ENCODE measurements at regions of chr9 and their contacts with region 1.

Region 1: DNA sequence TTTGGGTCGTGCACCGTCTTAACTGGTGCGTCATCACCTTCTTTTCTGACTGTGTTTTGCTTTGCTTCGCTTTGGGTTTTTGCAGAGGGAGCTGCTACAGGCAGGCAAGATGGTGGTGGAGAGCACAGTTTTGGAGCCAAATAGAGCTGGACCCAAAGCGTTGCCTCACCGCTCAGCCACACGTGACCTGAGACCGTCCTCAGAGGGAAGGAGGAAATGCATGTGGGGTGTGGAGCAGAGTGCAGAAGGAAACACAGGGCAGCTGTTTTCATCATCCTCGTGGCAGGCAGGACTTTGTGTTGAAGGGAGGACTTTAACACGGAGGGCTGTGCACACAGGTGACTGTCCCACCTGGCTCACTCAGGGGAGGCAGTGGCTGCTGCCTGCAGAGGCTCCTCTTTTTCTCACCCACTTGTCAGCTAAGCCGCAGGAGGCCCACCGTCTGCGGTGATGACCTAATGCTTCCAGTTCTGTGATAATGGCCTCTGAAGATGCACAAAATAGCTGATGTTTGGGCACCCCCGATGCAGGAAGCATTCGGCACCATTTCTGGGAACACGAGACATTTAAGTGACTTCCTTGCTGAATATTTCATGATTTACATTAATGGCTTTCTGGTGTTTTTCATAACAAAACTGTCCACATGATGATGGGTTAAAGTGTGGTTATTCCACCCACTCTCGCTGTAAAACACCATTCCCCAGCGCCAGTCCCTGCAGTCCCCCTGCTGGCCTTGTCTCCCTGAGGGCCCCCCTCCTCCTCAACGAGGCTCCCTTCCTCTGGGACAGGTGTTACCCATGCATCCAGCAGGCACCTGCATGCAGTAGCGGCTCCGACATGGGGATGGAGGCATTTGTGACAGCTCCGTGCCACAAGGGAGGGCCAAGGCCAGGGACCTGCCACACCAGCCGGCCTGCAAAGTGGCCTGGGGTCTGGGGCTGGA is 12.4 kb upstream of the UBAC1 start:
- DNase-seq: peak in 1 of 3 donors; percentile 51
- H3K4me3 ChIP-seq: no peak overlapping the region
- H3K27ac ChIP-seq: no peak overlapping the region
- H3K4me1 ChIP-seq: peaks cover 13 to 67% (median 47%) of the 10 kb centered on the region in 4 experiments
- H3K27me3 ChIP-seq: no peaks in the 10 kb centered on the region

Region 2: DNA sequence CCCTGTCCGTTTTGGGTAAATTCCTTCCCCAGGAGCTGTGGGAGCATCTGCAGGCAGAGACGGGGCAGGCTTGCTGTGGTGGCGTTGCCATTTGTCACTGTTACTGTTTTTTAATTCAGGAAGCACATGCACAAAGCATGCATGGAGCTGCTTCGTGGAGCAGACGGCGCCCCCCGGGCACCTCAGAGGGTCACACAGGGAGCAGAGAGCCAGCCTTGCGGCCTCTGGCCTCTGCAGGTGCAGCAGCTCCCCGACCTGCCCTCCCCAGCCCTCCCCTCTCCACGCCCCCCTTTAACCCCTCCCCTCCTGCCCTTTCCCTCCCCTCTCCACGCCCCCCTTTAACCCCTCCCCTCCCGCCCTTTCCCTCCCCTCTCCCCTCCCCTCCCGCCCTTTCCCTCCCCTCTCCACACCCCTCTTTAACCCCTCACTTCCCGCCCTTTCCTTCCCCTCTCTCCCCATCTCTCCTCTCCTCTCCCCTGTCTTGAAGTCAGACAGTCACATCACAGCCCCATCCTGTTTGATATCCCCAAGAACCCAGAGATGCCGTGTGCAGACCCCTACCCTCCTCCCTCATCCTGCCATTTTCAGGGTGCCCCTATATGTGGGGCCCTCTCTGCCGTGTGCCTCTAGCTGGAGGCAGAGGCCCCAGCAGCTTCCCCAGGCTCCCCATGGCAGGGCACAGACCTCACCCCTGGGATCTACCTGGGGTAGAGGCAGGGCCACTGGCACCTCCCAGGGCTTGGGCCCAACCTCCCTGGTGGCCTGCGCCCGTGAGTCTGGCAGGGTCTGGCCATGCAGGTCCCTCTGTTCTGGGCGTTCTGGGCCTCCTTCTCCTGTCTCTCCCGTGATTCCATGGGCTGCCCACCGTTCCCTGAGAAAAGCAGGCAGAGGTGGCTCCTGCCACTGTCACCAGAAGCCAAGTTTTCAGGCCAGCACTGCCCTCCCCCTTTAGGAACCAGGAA is 17.2 kb after region 1 on chr9:
- CTCF ChIA-PET with region 1: interaction called, 43 read pairs
- POLR2A ChIA-PET with region 1: interaction called, 5 read pairs
- DNase-seq: peak; percentile 90 to 91 (median 91)
- H3K4me3 ChIP-seq: peak overlapping the region in 3 of 7 experiments; percentile 44 to 57 (median 48)
- H3K27ac ChIP-seq: no peak overlapping the region
- H3K4me1 ChIP-seq: peaks cover 0 to 76% (median 62%) of the 10 kb centered on the region in 4 experiments
- H3K27me3 ChIP-seq: no peaks in the 10 kb centered on the region

Region 3: DNA sequence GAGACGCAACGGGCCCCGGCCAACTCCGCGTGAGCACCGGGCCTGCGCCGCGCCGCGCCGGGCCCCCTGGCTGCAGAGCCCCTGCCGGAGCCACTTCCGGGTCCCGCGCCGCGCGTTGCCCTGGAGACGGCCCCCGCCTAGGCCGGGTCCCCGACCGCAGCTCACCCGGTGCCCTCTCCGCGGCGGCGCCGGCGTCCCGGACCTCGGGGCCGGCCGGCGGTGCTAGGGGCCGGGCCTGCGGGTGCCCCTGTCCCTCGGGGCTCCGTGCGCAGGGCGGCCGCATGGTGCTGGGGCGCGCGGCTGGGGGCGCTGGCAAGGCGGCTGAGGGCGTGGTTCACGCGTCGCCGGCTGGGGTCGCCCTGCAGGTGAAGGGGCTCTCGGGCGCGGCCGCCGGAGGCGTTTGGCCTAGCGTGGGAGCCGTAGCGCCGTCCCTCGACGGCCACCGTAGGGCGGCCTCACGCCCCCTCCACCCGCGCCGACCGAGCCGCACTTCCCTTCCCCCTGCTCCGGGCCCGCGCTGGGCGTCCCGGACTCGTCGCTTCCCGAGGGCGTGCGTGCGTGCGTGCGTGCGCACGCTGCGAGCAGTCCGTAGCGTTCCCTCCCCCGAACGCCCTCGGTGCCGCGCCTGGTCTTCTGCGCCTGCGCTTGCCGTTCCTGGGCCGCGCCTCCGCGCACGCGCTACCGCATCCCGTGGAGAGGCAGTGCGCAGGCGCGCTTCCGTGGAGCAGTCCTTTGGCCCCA is 144.9 kb after region 1 on chr9 and contains the start of gene TMEM250:
- CTCF ChIA-PET with region 1: interaction called, 56 read pairs
- POLR2A ChIA-PET with region 1: no interaction called
- DNase-seq: peak; percentile 96 to 98 (median 97)
- H3K4me3 ChIP-seq: peak within 1 kb of the TSS; percentile 57 to 80 (median 77)
- H3K27ac ChIP-seq: peak within 1 kb of the TSS; percentile 54 to 81
- H3K4me1 ChIP-seq: peaks cover 0 to 34% (median 31%) of the 10 kb centered on the region in 4 experiments
- H3K27me3 ChIP-seq: no peaks in the 10 kb centered on the region

Measured in common myeloid progenitor, CD34-positive (primary cell).